ENCODE measurements at regions of chr7 and their contacts with region 1.

Region 1: GRCh38 chr7:112963634-112964033 is 123.0 kb downstream of the GPR85 start:
- DNase-seq: no peak
- ATAC-seq: no peak
- H3K4me3 Mint-ChIP-seq: no peak overlapping the region
- H3K27ac Mint-ChIP-seq: no peak overlapping the region
- H3K4me1 Mint-ChIP-seq: no peaks in the 10 kb centered on the region
- H3K27me3 Mint-ChIP-seq: peaks cover 21% of the 10 kb centered on the region
- CTCF ChIP-seq: no peak

Region 2: DNA sequence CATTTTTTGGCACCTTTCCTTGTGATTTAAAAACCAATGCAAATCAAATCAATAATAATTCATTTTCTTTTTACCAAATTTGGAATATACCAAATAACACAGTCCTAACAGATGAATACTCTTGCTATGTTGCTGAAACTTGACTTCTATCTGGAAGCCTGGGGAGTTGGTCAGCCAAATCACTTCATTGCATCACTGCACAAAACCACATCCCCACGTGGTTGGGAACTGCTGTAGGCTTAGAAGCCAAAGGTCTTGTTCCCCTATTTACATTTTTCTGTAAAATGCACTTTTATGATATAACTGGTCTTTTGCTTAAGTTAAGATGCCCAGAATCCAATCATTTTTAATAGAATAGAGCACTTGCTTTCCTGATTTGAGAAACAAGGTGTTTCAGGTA is 107.8 kb after region 1 on chr7:
- CTCF ChIA-PET with region 1: no interaction called
- POLR2A ChIA-PET with region 1: no interaction called
- intact Hi-C with region 1: loop called (anchors 5 kb)
- DNase-seq: no peak
- ATAC-seq: no peak
- H3K4me3 Mint-ChIP-seq: no peak overlapping the region
- H3K27ac Mint-ChIP-seq: no peak overlapping the region
- H3K4me1 Mint-ChIP-seq: no peaks in the 10 kb centered on the region
- H3K27me3 Mint-ChIP-seq: peaks cover 13% of the 10 kb centered on the region
- CTCF ChIP-seq: no peak